ENCODE measurements at regions of chr10 and their contacts with region 1.

Region 1: GRCh38 chr10:44300666-44301649 is 83.9 kb downstream of the CXCL12 start:
- DNase-seq: no peak
- CTCF ChIP-seq: no peak

Region 2: GRCh38 chr10:44198780-44199097 is 102.2 kb before region 1 on chr10:
- CTCF ChIA-PET with region 1: no interaction called
- POLR2A ChIA-PET with region 1: no interaction called
- DNase-seq: no peak
- CTCF ChIP-seq: no peak

Region 3: DNA sequence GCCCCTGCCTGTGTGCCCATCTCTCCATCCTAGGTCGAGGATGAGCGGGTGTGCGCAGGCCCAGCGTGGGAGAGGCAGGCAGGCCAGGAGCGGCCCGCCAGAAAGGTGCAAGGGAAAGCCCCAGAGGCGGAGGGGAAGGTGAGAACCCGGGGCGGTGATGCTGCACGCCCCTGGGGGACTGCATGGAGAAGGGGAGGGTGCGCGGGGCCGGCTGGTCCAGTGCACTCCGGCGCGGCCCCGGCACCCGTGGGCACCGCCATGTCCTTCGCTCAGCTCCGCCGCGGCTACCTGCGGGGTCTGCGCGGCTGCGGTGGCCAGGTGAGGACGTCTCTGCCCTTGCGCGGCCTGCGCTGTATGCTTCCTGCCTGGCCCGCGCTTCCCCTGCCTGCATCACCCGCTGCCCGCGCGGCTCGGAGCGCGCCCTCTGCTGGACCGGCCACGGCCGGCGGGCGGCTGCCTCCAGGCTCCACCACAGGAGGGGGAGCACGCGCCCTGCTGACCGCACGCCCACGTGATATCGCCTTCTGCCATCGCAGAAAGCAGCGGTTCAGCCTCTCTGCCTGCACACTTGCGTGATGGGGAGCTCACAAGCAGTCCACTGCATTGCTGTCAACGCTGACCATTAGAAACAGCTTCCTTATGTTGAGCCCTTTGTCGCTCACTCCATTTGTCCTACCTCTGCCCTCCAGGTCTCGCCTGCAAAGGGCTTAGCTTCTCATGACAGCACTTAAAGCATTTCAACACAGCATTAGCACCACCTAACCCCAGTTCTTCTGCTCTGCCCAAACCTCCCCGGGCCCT is 10.0 kb after region 1 on chr10:
- CTCF ChIA-PET with region 1: interaction called, 29 read pairs
- POLR2A ChIA-PET with region 1: no interaction called
- DNase-seq: peak; percentile 83
- CTCF ChIP-seq: peak; percentile 90

Region 4: DNA sequence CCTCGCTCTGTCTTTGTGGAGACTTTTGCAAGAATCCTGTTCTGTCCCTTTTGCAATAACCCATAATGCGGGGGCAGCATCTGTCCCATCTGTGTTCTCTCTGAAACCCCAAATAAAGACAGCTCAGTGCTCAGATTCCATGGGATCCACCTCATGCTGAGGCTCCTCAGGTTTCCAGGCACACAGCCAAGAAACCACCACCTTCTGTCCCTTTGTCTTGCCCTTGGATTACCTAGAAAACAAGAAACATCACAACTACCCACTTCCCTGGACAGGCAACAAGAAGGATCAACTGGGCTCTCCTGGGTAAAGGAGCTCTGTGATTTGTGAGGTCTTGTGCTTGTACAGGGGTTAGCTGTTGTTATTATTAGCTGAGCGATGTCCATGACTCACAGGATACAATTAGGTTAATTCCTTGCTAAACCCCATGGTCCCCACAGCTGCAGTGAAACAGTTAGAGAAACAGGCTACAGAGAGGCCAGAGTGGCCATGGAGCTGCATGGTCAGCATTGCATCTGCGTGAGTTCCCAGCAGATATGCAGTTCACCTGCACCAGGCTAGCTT is 33.7 kb after region 1 on chr10:
- CTCF ChIA-PET with region 1: no interaction called
- POLR2A ChIA-PET with region 1: no interaction called
- DNase-seq: no peak
- CTCF ChIP-seq: no peak

Measured in GM10248 (cell line).